Right ventricle myocardium superior (tissue), 1 donor: ENCODE measurements at regions of chr20 and their contacts with region 1.

Region 1: DNA sequence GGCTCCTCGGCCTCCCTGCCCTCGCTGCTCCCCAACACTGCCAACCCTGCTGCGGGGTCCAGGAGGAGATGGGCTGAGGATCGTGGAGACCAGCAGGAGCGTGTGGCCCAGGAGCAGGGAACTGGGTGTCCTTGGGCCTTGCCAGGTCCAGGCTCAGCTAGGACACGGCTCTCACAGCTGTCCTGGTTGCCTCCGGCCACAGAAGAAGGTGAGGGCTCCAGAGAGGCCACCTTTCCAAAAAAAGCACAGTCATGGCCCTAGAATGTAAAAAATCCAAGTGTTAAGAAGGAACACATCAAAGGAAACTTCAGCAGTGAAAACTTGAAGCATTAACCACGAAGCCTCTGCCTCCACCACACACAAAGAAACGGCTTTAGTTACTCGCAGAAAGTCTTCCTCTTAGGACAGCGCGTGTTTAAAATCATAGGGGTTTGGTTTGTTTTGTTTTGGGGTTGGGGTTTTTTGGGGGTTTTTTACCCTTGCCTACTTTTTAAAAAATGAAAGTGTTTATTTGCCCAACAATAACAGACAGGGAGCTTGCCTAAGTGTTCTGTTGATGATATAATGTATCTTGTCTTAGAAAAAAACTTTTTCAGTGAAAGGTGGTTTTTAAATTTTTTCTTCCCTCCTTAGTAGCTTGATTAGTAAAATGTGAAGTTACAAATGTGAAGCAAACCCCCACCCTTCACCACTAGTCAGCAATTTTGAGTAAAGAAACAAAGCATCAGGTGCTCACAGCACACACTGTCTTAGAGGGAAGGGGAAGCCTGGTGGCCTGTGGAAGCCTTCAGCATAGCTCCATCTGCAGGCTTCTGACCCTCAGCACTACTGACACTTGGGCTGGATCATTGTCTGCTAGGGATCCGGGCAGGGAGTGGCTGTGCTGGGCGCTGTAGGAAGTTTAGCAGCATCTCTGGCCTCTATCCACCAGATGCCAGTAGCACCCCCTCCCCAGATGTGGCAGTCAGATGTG is 60.0 kb downstream of the PTPN1 start:
- DNase-seq: no peak
- ATAC-seq: peak; percentile 34

Region 2: GRCh38 chr20:50509935-50510705 is 60.0 kb before region 1 on chr20 and contains the start of gene PTPN1:
- intact Hi-C with region 1: loop called (anchors 5 kb)
- DNase-seq: peak; percentile 99
- ATAC-seq: peak; percentile 98
- total RNA-seq, gene PTPN1: 20.1 TPM